GM12878 (cell line): ENCODE measurements at regions of chr1 and their contacts with region 1.

Region 1: GRCh38 chr1:230057681-230058620 is 9.1 kb upstream of the GALNT2 start:
- DNase-seq: no peak
- ATAC-seq: no peak
- H3K4me3 ChIP-seq: no peak overlapping the region
- H3K27ac ChIP-seq: no peak overlapping the region
- H3K4me1 ChIP-seq: no peaks in the 10 kb centered on the region
- H3K27me3 ChIP-seq: peaks cover 0 to 1% of the 10 kb centered on the region in 2 experiments; a peak in 2 of 4 replicates
- CTCF ChIP-seq: no peak
- EP300 ChIP-seq: no peak
- POLR2A ChIP-seq: no peak
- RAD21 ChIP-seq: no peak

Region 2: GRCh38 chr1:230043081-230043480 is 14.9 kb before region 1 on chr1:
- CTCF ChIA-PET with region 1: no interaction called
- POLR2A ChIA-PET with region 1: no interaction called
- RAD21 ChIA-PET with region 1: no interaction called
- SMC1A ChIA-PET with region 1: interaction called, 10 read pairs
- in situ Hi-C with region 1: no loop called
- intact Hi-C with region 1: no loop called
- DNase-seq: no peak
- ATAC-seq: no peak
- H3K4me3 ChIP-seq: no peak overlapping the region
- H3K27ac ChIP-seq: no peak overlapping the region
- H3K4me1 ChIP-seq: no peaks in the 10 kb centered on the region
- H3K27me3 ChIP-seq: peaks cover 0 to 1% of the 10 kb centered on the region in 2 experiments; a peak in 1 of 4 replicates
- CTCF ChIP-seq: no peak
- EP300 ChIP-seq: no peak
- POLR2A ChIP-seq: no peak
- RAD21 ChIP-seq: no peak